HEK293 (cell line): ENCODE measurements at regions of chr12 and their contacts with region 1.

Region 1: GRCh38 chr12:77925536-77926108 is 94.9 kb downstream of the NAV3 start:
- H3K4me3 ChIP-seq: no peak overlapping the region
- H3K27ac ChIP-seq: no peak overlapping the region
- H3K4me1 ChIP-seq: peaks cover 7% of the 10 kb centered on the region
- CTCF ChIP-seq: peak; percentile 85

Region 2: DNA sequence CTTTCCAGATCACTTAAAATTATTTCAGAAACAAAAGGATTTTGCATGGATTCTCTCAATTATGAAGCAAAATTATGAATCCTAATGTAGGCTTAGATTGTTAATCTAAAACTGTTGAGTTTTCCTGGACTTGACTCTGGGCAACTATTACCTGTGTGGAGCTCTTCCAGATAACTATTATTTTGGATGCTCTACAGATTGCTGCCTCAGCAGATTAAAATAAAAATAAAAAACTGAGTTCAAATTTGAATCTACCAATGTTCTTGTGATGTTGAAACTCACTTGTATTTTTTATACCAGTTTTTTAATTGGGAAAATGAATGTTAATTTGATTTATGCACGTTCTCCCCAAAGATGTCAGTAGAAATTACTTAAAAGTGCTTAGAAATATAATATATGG is 215.4 kb before region 1 on chr12:
- CTCF ChIA-PET with region 1: interaction called, 11 read pairs
- POLR2A ChIA-PET with region 1: no interaction called
- H3K4me3 ChIP-seq: no peak overlapping the region
- H3K27ac ChIP-seq: no peak overlapping the region
- H3K4me1 ChIP-seq: no peaks in the 10 kb centered on the region
- CTCF ChIP-seq: no peak

Region 3: DNA sequence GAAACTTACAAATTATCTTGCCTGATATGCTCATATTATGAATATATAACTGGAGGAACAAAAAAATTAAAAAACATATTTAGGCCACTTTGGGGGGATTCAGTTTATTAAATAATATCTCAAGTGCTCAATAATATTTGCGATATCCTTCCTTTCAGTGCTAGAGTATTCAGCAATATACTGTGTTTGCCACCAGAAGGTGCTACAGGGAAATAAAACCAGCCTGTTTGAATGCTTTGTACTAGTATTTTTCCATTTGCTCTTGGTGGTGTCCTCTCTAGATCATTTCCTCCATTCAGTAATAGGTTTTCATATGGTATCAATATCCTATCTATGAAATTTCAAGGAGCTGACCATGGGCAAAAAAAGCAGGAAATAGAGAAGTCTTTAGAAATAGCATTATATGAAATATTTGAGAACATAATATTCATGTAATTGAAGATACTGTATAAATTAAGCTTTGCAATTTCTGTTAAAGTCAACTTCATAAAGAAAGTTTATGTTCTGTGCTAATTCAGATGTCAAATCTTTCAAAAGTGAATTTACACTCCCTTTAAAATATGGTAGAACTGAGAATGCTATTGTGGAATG is 201.2 kb before region 1 on chr12:
- CTCF ChIA-PET with region 1: interaction called, 93 read pairs
- POLR2A ChIA-PET with region 1: no interaction called
- H3K4me3 ChIP-seq: no peak overlapping the region
- H3K27ac ChIP-seq: no peak overlapping the region
- H3K4me1 ChIP-seq: no peaks in the 10 kb centered on the region
- CTCF ChIP-seq: no peak

Region 4: GRCh38 chr12:77821699-77822203 is 103.9 kb before region 1 on chr12:
- CTCF ChIA-PET with region 1: no interaction called
- POLR2A ChIA-PET with region 1: no interaction called
- H3K4me3 ChIP-seq: no peak overlapping the region
- H3K27ac ChIP-seq: no peak overlapping the region
- H3K4me1 ChIP-seq: peaks cover 10% of the 10 kb centered on the region
- CTCF ChIP-seq: no peak

Region 5: DNA sequence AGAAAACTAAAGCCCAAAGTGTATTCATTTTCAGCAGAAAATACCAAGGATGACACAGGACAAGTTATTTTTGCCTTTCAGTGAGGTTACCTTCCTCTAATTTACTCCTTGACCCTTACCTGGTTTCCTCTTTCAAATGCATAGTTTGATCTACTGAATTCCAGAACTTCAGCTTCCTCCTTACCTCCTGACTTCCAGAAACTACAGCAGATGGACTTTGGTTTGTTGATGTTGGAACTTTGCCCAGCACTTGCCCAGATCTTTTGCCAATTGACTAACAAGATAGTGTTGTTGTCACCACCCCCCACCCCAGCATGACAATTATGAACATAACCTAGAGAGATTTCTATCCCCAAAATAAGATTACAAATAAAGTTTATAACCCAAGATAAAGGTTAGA is 31.7 kb before region 1 on chr12:
- CTCF ChIA-PET with region 1: interaction called, 11 read pairs
- POLR2A ChIA-PET with region 1: no interaction called
- H3K4me3 ChIP-seq: no peak overlapping the region
- H3K27ac ChIP-seq: no peak overlapping the region
- H3K4me1 ChIP-seq: peaks cover 34% of the 10 kb centered on the region
- CTCF ChIP-seq: no peak

Region 6: GRCh38 chr12:77914081-77914488 is 11.5 kb before region 1 on chr12:
- CTCF ChIA-PET with region 1: interaction called, 25 read pairs
- POLR2A ChIA-PET with region 1: interaction called, 4 read pairs
- H3K4me3 ChIP-seq: no peak overlapping the region
- H3K27ac ChIP-seq: no peak overlapping the region
- H3K4me1 ChIP-seq: peaks cover 10% of the 10 kb centered on the region
- CTCF ChIP-seq: no peak